Head of caudate nucleus (tissue), 42 donors: ENCODE measurements at regions of chr12 and their contacts with region 1.

Region 1: DNA sequence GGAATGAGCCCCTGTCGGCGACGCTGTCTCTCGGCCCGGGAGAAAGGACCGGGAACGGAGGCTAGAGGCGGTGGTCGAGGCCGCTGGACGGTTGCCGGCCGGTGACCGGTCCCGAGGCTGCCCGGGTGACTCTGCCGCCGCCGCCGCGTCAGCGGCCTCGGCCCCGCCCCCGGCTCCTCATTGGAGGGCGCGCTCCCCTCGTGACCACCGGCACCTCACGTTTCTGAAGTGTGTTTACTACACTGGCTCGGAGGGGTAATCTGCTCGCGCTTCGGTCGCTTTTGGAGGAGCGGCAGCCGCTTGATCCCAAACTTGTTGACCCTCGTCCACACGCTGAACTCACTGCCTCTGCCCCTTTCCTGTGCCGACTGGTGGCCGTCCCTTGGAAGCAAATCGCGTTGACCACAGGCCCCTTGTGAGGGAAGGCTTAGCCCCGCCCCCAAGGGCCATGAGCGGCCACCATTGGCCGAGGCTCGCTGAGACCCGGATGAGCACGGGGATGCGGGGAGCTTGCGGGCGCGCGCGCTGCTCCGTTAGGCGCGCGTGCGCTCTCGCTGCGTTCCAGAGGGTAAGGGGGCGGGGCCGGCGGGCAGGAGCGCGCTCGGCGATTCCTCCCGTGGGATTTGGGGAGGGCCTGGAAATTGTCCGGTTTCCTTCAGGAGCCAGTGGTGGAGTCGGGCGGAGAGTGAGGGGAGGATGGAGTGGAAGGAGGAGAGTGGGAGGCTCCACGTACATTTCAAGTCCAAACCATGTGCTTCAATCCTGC is at the start of gene CRY1:
- DNase-seq: peak; percentile 90 to 98 (median 96)

Region 2: GRCh38 chr12:106955377-106956047 is 138.1 kb before region 1 on chr12 and contains the start of gene TMEM263:
- intact Hi-C with region 1: loop called (anchors 5 kb)
- DNase-seq: peak; percentile 67 to 96 (median 90)